AG04450 (cell line): ENCODE measurements at regions of chr1 and their contacts with region 1.

Region 1: GRCh38 chr1:178031856-178032320 is 62.0 kb upstream of the RASAL2 start:
- DNase-seq: peak; percentile 87
- H3K4me3 ChIP-seq: no peak overlapping the region
- H3K27ac ChIP-seq: no peak overlapping the region
- H3K27me3 ChIP-seq: no peaks in the 10 kb centered on the region
- CTCF ChIP-seq: peak; percentile 88

Region 2: GRCh38 chr1:178020968-178021640 is 10.8 kb before region 1 on chr1:
- CTCF ChIA-PET with region 1: interaction called, 22 read pairs
- POLR2A ChIA-PET with region 1: no interaction called
- DNase-seq: no peak
- H3K4me3 ChIP-seq: no peak overlapping the region
- H3K27ac ChIP-seq: no peak overlapping the region
- H3K27me3 ChIP-seq: no peaks in the 10 kb centered on the region
- CTCF ChIP-seq: no peak

Region 3: GRCh38 chr1:178086766-178087165 is 54.9 kb after region 1 on chr1:
- CTCF ChIA-PET with region 1: interaction called, 26 read pairs
- POLR2A ChIA-PET with region 1: no interaction called
- DNase-seq: no peak
- H3K4me3 ChIP-seq: no peak overlapping the region
- H3K27ac ChIP-seq: no peak overlapping the region
- H3K27me3 ChIP-seq: no peaks in the 10 kb centered on the region
- CTCF ChIP-seq: no peak

Region 4: GRCh38 chr1:178134061-178134460 is 102.2 kb after region 1 on chr1:
- CTCF ChIA-PET with region 1: interaction called, 22 read pairs
- POLR2A ChIA-PET with region 1: no interaction called
- DNase-seq: peak; percentile 13
- H3K4me3 ChIP-seq: no peak overlapping the region
- H3K27ac ChIP-seq: no peak overlapping the region
- H3K27me3 ChIP-seq: no peaks in the 10 kb centered on the region
- CTCF ChIP-seq: no peak

Region 5: GRCh38 chr1:178273707-178274410 is 242.0 kb after region 1 on chr1:
- CTCF ChIA-PET with region 1: interaction called, 15 read pairs
- POLR2A ChIA-PET with region 1: no interaction called
- DNase-seq: no peak
- H3K4me3 ChIP-seq: no peak overlapping the region
- H3K27ac ChIP-seq: no peak overlapping the region
- H3K27me3 ChIP-seq: no peaks in the 10 kb centered on the region
- CTCF ChIP-seq: no peak

Region 6: DNA sequence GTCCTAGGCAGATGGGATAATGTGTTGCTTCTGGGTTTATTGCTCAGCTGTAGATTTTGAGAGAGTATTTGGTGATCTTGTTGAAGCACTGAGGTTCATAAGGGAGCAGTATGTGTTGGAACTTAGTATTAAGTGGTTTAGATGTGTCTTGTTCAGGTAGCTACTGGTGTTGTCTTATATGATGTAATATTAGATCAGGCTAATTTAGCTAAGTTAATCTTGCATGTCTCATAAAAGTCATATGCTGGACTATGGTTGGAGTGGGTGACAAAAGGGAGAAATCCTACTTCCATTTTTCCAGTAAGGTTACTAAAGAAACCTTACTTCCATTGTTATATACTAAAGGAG is 268.4 kb after region 1 on chr1:
- CTCF ChIA-PET with region 1: interaction called, 83 read pairs
- POLR2A ChIA-PET with region 1: no interaction called
- DNase-seq: no peak
- H3K4me3 ChIP-seq: no peak overlapping the region
- H3K27ac ChIP-seq: no peak overlapping the region
- H3K27me3 ChIP-seq: no peaks in the 10 kb centered on the region
- CTCF ChIP-seq: no peak